ENCODE measurements at regions of chr7 and their contacts with region 1.

Region 1: DNA sequence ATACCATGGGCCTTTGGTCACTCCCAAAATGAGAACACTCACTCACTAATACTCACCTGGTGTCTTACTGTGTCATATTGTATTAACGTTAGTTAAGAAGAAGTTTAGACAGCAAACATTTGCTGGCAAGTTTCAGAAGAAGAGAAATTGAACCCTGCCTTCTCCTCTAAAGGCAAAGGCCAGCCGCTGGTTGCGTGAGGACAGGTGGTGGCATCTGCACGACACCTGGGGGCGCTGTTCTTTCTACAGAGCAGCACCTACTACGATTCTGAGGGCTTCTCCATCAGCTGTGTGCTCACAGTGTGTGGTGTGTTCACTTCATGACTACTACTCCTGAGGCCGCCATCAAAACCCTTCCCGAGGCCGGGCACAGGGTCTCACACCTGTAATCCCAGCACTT is 17.9 kb upstream of the CLEC2L start:
- DNase-seq: no peak
- H3K4me3 ChIP-seq: no peak overlapping the region
- H3K27ac ChIP-seq: no peak overlapping the region
- H3K4me1 ChIP-seq: no peaks in the 10 kb centered on the region
- H3K27me3 ChIP-seq: no peaks in the 10 kb centered on the region
- CTCF ChIP-seq: no peak

Region 2: DNA sequence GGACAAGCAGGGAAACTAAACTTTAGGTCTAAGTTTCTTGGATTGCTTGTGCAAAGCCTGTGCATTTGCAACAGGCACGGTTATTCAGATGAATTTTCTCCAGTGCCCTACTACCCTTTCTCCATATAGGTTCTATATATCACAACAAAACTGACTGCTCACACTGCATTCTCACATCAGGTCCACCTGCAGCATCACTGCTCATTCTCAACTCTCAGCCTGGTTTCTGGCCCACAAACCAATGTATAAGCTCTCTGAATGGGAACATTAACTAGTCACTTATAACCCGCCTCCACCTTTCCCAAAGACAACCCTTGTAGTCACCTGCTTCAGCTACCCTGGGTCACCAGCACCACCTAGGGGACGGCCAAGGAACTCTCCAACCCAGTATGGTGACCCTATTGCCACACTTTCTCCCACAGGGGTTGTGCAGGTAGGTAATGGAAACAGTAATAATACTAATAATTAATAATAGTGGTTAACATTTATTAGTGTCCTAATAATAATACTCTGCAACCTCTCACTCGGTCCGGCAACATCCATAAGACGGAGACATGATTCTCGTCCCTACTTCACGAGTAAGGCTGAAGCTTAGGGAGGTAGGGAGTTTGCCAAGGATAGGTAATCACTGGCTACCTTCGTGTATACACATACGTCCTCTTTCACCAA is 115.2 kb after region 1 on chr7:
- intact Hi-C with region 1: loop called (anchors 5 kb)
- DNase-seq: peak; percentile 68
- H3K4me3 ChIP-seq: no peak overlapping the region
- H3K27ac ChIP-seq: no peak overlapping the region
- H3K4me1 ChIP-seq: no peaks in the 10 kb centered on the region
- H3K27me3 ChIP-seq: no peaks in the 10 kb centered on the region
- CTCF ChIP-seq: peak; percentile 76